ENCODE measurements at regions of chr7 and their contacts with region 1.

Region 1: GRCh38 chr7:92447345-92448204 is at the start of gene GATAD1:
- DNase-seq: peak; percentile 99
- H3K4me3 ChIP-seq: peak within 1 kb of the TSS; percentile 70 to 99
- H3K27ac ChIP-seq: peak within 1 kb of the TSS; percentile 77 to 97
- H3K4me1 ChIP-seq: peaks cover 8 to 13% of the 10 kb centered on the region in 2 experiments; a peak in 2 of 4 replicates
- H3K27me3 ChIP-seq: no peaks in the 10 kb centered on the region
- CTCF ChIP-seq: no peak; the same call in 1 of the 2 replicates
- EP300 ChIP-seq: peak in 1 of 2 experiments; percentile 56; a peak in 2 of 4 replicates
- RAD21 ChIP-seq: no peak
- polyA plus RNA-seq, gene GATAD1: 30.6 and 47.9 TPM in 2 replicates

Region 2: DNA sequence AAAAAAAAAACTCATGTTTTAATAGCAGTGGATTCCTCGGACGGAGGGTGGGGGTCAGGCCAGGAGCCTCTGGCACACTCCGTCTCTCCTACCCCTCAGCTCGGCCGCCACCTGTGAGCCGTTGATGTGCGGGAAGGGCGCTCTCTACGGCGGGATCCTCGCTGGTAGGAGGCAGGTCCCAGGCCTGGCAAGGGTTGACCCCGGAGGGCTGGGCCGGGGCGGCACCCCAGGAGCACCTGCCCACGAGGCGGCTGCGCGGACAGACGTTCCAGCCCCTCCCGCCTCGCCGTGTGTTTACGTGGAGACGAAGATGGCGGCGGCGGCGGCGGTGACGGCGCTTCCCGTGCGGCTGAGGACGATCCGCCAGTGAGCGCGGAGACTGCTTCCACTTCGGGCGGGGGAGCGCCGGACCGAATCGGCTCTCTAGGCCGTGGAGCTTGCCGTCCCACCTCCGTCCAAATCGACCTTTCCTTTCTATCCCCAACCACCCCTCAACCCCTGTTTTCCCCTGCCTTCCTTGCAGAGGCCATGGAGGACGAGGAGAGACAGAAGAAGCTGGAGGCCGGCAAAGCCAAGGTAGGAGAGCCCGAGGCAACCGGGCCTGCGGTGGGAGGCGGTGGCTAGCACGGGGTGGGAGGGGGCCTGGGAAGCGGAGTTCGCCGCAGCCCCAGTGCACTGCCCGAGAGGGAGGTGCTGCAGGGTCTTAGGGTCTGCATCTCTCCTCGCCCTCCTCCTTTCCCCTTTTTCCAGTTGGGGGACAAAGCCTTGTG is 506.8 kb before region 1 on chr7 and contains the start of gene AKAP9:
- CTCF ChIA-PET with region 1: interaction called, 13 read pairs
- POLR2A ChIA-PET with region 1: interaction called, 3 read pairs
- DNase-seq: peak; percentile 93
- H3K4me3 ChIP-seq: peak within 1 kb of the TSS; percentile 77 to 95
- H3K27ac ChIP-seq: peak within 1 kb of the TSS; percentile 89 to 95
- H3K4me1 ChIP-seq: peaks cover 8 to 9% of the 10 kb centered on the region in 2 experiments; a peak in 3 of 4 replicates
- H3K27me3 ChIP-seq: no peaks in the 10 kb centered on the region
- CTCF ChIP-seq: no peak
- EP300 ChIP-seq: no peak
- RAD21 ChIP-seq: no peak
- polyA plus RNA-seq, gene AKAP9: 13.1 and 16.7 TPM in 2 replicates

Region 3: GRCh38 chr7:92178927-92179924 is 268.3 kb before region 1 on chr7 and contains the start of gene LRRD1:
- CTCF ChIA-PET with region 1: interaction called, 13 read pairs
- POLR2A ChIA-PET with region 1: interaction called, 3 read pairs
- DNase-seq: peak; percentile 95
- H3K4me3 ChIP-seq: peak within 1 kb of the TSS; percentile 37 to 56
- H3K27ac ChIP-seq: no peak within 1 kb of the TSS
- H3K4me1 ChIP-seq: peaks cover 0 to 4% of the 10 kb centered on the region in 2 experiments; a peak in 1 of 4 replicates
- H3K27me3 ChIP-seq: no peaks in the 10 kb centered on the region
- CTCF ChIP-seq: peak; percentile 88
- EP300 ChIP-seq: no peak
- RAD21 ChIP-seq: peak; percentile 69
- polyA plus RNA-seq, gene LRRD1: 0.03 TPM in 1 of 2 replicates, not detected in the other

Region 4: GRCh38 chr7:92415225-92415624 is 32.4 kb before region 1 on chr7:
- CTCF ChIA-PET with region 1: interaction called, 108 read pairs
- POLR2A ChIA-PET with region 1: interaction called, 3 read pairs
- DNase-seq: no peak
- H3K4me3 ChIP-seq: no peak overlapping the region
- H3K27ac ChIP-seq: no peak overlapping the region
- H3K4me1 ChIP-seq: no peaks in the 10 kb centered on the region
- H3K27me3 ChIP-seq: no peaks in the 10 kb centered on the region
- CTCF ChIP-seq: no peak
- EP300 ChIP-seq: no peak
- RAD21 ChIP-seq: no peak

Region 5: GRCh38 chr7:92461027-92462003 is 13.7 kb after region 1 on chr7:
- CTCF ChIA-PET with region 1: interaction called, 66 read pairs
- POLR2A ChIA-PET with region 1: interaction called, 3 read pairs
- DNase-seq: peak; percentile 68
- H3K4me3 ChIP-seq: no peak overlapping the region; a peak in 1 of 4 replicates
- H3K27ac ChIP-seq: no peak overlapping the region
- H3K4me1 ChIP-seq: peaks cover 0 to 4% of the 10 kb centered on the region in 2 experiments; a peak in 2 of 4 replicates
- H3K27me3 ChIP-seq: no peaks in the 10 kb centered on the region
- CTCF ChIP-seq: peak; percentile 98
- EP300 ChIP-seq: no peak
- RAD21 ChIP-seq: peak; percentile 74

Region 6: DNA sequence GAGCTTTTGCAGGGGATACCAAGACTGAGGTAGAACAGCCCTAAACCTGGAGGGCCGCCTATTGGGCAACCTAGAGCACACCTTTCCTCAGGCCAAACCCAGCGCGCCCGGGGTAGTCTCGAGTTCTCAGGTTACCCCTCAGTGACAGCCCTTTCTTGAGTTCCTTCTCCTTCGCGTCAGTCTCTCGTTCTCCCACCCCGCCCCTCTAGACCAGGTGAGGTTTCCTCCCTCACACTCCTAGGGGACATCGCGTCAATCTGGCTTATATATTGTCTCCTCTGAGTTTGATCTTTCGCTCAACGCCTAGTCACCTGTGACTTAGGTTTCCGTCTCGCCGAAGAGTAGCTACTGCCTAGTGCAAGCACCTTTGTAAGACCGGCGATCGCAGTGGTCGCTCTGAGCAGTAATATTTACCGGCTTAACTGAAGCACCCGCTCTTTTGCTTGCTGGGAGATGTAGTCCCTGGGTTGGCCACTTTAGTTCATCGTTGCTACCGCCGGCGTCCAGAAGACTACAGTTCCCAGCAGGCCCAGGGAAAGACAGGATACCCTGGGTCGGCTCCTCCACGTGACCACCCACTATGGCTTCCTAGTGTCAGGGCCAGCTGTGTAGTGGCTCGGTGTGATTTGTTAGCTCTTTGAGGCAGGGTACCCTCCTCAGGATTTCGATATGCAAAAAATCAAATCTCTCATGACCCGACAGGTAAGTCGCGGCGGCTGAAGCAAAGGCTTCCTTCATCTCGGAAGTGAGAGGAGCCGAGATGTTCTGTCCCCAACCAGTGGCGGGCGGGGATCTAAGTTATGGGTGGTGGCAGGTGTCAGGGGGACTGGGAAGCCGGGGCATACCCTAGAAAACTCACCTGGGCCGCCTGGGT is 784.5 kb after region 1 on chr7 and contains the start of gene VPS50:
- CTCF ChIA-PET with region 1: no interaction called
- POLR2A ChIA-PET with region 1: no interaction called
- DNase-seq: peak; percentile 90
- H3K4me3 ChIP-seq: peak within 1 kb of the TSS; percentile 83 to 92
- H3K27ac ChIP-seq: peak within 1 kb of the TSS in 1 of 2 experiments; percentile 55; a peak in 1 of 4 replicates
- H3K4me1 ChIP-seq: peaks cover 7 to 17% of the 10 kb centered on the region in 2 experiments; a peak in 2 of 4 replicates
- H3K27me3 ChIP-seq: no peaks in the 10 kb centered on the region
- CTCF ChIP-seq: peak; percentile 7
- EP300 ChIP-seq: peak in 1 of 2 experiments; percentile 36; a peak in 1 of 4 replicates
- RAD21 ChIP-seq: no peak
- polyA plus RNA-seq, gene VPS50: 9.1 and 12.4 TPM in 2 replicates

Measured in SK-N-SH (cell line).